Caco-2 (cell line): ENCODE measurements at regions of chr15 and their contacts with region 1.

Region 1: GRCh38 chr15:99755692-99756409 is 22.6 kb upstream of the LYSMD4 start:
- DNase-seq: peak; percentile 44 to 65
- H3K4me3 ChIP-seq: no peak overlapping the region
- H3K4me3 Mint-ChIP-seq: no peak overlapping the region
- H3K27ac Mint-ChIP-seq: no peak overlapping the region
- H3K4me1 ChIP-seq: no peaks in the 10 kb centered on the region
- H3K4me1 Mint-ChIP-seq: no peaks in the 10 kb centered on the region
- H3K27me3 ChIP-seq: no peaks in the 10 kb centered on the region
- H3K27me3 Mint-ChIP-seq: no peaks in the 10 kb centered on the region
- CTCF ChIP-seq: peak; percentile 72 to 74

Region 2: GRCh38 chr15:99273801-99274200 is 482.1 kb before region 1 on chr15:
- CTCF ChIA-PET with region 1: no interaction called
- POLR2A ChIA-PET with region 1: no interaction called
- intact Hi-C with region 1: loop called (anchors 1 kb)
- DNase-seq: no peak
- H3K4me3 ChIP-seq: no peak overlapping the region
- H3K4me3 Mint-ChIP-seq: no peak overlapping the region
- H3K27ac Mint-ChIP-seq: no peak overlapping the region
- H3K4me1 ChIP-seq: no peaks in the 10 kb centered on the region
- H3K4me1 Mint-ChIP-seq: no peaks in the 10 kb centered on the region
- H3K27me3 ChIP-seq: no peaks in the 10 kb centered on the region
- H3K27me3 Mint-ChIP-seq: no peaks in the 10 kb centered on the region
- CTCF ChIP-seq: no peak

Region 3: GRCh38 chr15:99282121-99282520 is 473.7 kb before region 1 on chr15:
- CTCF ChIA-PET with region 1: interaction called, 3 read pairs
- POLR2A ChIA-PET with region 1: no interaction called
- intact Hi-C with region 1: loop called (anchors 1 kb)
- DNase-seq: no peak
- H3K4me3 ChIP-seq: no peak overlapping the region
- H3K4me3 Mint-ChIP-seq: no peak overlapping the region
- H3K27ac Mint-ChIP-seq: no peak overlapping the region
- H3K4me1 ChIP-seq: no peaks in the 10 kb centered on the region
- H3K4me1 Mint-ChIP-seq: no peaks in the 10 kb centered on the region
- H3K27me3 ChIP-seq: no peaks in the 10 kb centered on the region
- H3K27me3 Mint-ChIP-seq: no peaks in the 10 kb centered on the region
- CTCF ChIP-seq: no peak

Region 4: DNA sequence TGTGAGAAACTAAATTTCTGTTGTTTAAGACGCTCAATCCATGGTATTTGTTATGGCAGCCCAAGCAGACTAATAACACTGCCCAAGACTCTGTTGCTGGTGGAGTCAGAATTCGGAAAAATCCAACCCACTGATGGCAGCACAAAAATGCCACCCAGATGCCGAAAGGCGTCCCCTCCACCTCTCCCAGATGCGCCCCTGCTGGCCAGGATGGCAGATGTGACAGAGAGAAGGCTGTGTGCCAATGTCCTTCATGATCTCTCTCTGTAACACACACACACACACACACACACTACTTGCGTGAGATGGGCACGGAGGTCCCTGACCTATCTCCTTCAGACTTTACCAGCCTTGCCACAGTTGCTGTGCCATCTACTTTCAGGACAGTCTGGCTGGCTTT is 11.7 kb before region 1 on chr15:
- CTCF ChIA-PET with region 1: no interaction called
- POLR2A ChIA-PET with region 1: no interaction called
- intact Hi-C with region 1: no loop called
- DNase-seq: no peak
- H3K4me3 ChIP-seq: no peak overlapping the region
- H3K4me3 Mint-ChIP-seq: no peak overlapping the region
- H3K27ac Mint-ChIP-seq: no peak overlapping the region
- H3K4me1 ChIP-seq: no peaks in the 10 kb centered on the region
- H3K4me1 Mint-ChIP-seq: no peaks in the 10 kb centered on the region
- H3K27me3 ChIP-seq: no peaks in the 10 kb centered on the region
- H3K27me3 Mint-ChIP-seq: no peaks in the 10 kb centered on the region
- CTCF ChIP-seq: no peak

Region 5: DNA sequence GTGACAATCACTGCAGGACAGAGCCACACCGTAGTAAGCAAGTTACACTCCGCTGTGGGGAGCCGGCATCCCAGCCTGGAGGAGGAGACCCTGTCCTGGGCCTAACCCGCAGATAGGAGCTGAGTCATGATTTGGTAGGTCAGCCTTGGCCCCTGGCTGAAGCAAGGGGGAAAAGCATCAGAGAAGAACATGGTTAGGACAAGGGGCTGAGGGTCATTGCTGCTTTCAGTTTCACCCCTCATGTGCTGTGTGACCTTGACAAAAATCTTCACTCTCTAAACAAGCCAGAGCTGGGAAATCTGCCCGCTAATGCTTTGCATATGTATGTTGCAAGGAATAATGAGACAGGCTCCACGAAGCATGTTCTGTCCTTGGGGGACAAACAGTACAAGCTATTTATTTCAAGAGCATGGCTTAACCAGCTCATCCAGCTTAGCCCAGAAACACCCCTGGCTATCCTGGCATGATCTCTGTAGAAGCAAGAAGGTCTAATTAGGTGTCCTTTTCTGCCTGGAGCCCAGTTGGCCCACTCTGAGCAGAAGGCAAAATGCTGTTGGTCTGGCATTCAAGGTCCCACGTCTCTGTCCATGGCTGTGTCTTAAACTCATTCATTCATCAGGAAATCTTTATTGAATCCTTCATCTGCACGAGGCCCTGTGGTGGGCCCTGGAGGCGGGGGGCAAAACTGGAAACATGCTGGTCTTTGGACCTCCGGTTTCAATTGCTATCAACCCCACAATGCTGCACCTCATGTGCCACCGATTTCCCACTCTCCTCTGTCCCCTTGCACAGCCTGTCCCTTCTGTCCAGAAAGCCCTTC is 198.7 kb after region 1 on chr15:
- CTCF ChIA-PET with region 1: no interaction called
- POLR2A ChIA-PET with region 1: no interaction called
- intact Hi-C with region 1: no loop called
- DNase-seq: no peak
- H3K4me3 ChIP-seq: no peak overlapping the region
- H3K4me3 Mint-ChIP-seq: no peak overlapping the region
- H3K27ac Mint-ChIP-seq: no peak overlapping the region
- H3K4me1 ChIP-seq: no peaks in the 10 kb centered on the region
- H3K4me1 Mint-ChIP-seq: no peaks in the 10 kb centered on the region
- H3K27me3 ChIP-seq: no peaks in the 10 kb centered on the region
- H3K27me3 Mint-ChIP-seq: no peaks in the 10 kb centered on the region
- CTCF ChIP-seq: no peak